Right ventricle myocardium superior (tissue), 1 donor: ENCODE measurements at regions of chr3 and their contacts with region 1.

Region 1: DNA sequence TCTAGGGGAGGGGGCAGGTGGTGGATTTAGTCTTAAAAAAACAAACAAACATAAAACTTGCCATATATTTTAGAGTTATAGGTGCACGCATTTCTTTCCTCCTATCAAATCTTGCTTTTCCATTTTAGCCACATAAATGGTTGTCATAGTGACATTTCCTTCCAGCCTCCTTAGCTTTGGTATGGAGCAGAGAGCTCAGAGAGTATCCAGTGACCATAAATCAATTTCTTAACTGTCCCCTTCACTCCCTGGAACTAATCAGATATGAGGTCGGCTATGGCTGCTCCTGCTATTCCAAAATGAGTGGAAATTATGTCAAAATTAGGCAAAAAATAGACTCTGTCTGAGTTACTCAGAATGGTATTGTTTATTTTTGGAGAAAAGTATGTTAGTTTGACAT is 164.5 kb downstream of the EBLN2 start:
- DNase-seq: no peak
- ATAC-seq: no peak

Region 2: DNA sequence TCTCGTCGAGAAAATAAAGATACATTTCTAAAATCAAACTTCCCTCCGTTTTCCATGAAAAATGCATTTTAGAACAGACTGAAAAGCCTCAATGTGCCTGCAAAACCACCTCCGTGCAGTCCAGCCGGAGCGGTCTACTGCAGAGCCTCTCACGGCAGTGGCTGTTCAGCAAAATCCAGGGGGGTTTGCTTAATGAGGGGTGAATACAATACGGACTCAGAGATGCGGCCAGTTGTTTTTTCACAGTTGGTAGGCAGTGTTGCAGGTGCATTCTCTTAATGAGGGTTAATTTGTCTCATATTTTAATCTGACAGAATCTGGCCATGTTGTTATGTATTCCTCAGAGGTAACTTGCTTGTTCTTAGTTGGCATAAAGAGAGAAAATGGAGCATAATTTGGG is 58.5 kb after region 1 on chr3:
- intact Hi-C with region 1: loop called (anchors 2 kb)
- DNase-seq: no peak
- ATAC-seq: no peak

Region 3: DNA sequence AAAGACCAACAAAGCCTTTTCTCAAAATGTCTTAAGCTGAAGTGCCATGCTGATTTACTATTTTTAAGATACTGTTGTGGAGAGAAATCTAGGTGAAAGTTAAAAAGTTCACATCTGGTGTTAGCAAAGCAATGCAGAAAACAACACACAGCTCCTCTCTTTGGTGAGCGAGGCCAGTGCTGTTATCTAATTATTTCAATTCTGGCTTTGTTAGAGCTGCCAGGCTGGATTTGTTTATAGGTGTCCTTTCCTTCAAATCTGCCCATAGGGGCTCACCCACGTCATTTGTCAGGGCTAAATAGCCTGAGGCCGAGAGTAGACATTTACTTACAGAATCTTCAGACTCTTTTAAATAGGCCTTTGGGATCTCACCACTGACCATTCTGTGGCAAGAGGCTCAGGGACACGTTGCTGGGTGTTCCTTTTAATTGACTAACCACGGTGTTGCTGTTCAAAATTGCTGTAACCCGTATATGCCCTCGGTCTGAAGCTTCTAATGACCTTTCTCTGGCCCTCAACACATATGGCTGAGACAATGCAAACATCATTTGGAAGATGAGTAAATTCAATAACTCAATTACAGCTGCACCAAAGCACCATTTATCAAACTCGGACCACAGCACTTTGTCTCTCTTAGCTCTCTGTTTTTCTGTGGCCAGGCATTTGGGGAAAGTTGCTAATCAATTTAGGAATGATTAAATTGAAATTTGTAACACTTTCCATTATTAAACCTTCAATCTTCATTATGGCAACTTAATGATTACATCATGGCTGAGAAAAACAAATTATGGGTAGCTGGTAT is 246.2 kb after region 1 on chr3:
- intact Hi-C with region 1: no loop called
- DNase-seq: no peak
- ATAC-seq: peak; percentile 42